ENCODE measurements at regions of chr4 and their contacts with region 1.

Region 1: GRCh38 chr4:77156533-77156911 is 485 bp upstream of the CCNG2 start:
- DNase-seq: peak; percentile 98
- ATAC-seq: peak; percentile 88
- H3K4me3 Mint-ChIP-seq: peak overlapping the region; percentile 97
- H3K27ac Mint-ChIP-seq: peak overlapping the region; percentile 100
- H3K4me1 Mint-ChIP-seq: peaks cover 57% of the 10 kb centered on the region
- H3K27me3 Mint-ChIP-seq: no peaks in the 10 kb centered on the region; the same call in 1 of the 2 replicates
- CTCF ChIP-seq: no peak

Region 2: GRCh38 chr4:77075869-77076799 is 80.4 kb before region 1 on chr4 and contains the start of gene CCNI:
- CTCF ChIA-PET with region 1: no interaction called
- POLR2A ChIA-PET with region 1: interaction called, 32 read pairs
- DNase-seq: peak; percentile 97
- ATAC-seq: peak; percentile 84
- H3K4me3 Mint-ChIP-seq: peak within 1 kb of the TSS; percentile 96
- H3K27ac Mint-ChIP-seq: peak within 1 kb of the TSS; percentile 100
- H3K4me1 Mint-ChIP-seq: peaks cover 28% of the 10 kb centered on the region
- H3K27me3 Mint-ChIP-seq: no peaks in the 10 kb centered on the region
- CTCF ChIP-seq: no peak
- total RNA-seq, gene CCNI: 213 to 253 TPM (median 248 TPM) in 3 replicates